Tibial artery (tissue), 4 donors: ENCODE measurements at regions of chr2 and their contacts with region 1.

Region 1: GRCh38 chr2:99559075-99559662 is 69.4 kb upstream of the REV1 start:
- DNase-seq: peak; percentile 85 to 88
- H3K4me3 ChIP-seq: no peak overlapping the region
- H3K27ac ChIP-seq: no peak overlapping the region
- H3K4me1 ChIP-seq: no peaks in the 10 kb centered on the region
- H3K27me3 ChIP-seq: no peaks in the 10 kb centered on the region
- CTCF ChIP-seq: peak; percentile 98 to 99

Region 2: DNA sequence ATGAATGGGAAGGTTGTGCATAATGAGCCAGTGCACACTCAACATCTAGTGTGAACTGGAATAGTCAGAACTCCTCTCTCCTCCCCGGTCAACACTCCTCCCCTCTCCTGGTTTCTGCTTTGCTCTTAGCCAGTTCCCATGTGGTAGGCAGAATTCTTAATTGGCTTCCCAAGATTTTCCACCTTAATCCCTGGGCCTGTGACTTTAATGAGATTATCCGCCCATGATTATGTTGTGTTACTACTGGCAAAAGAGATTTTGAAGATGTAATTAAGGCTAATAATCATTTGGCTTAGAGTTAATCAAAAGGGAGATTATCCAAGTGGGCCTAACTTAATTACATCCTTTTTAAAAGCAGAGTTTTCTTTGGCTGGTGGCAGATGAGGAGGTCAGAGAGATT is 35.1 kb before region 1 on chr2:
- intact Hi-C with region 1: no loop called
- DNase-seq: no peak
- H3K4me3 ChIP-seq: no peak overlapping the region
- H3K27ac ChIP-seq: no peak overlapping the region
- H3K4me1 ChIP-seq: no peaks in the 10 kb centered on the region
- H3K27me3 ChIP-seq: peaks cover 0 to 3% of the 10 kb centered on the region in 2 donors
- CTCF ChIP-seq: no peak

Region 3: GRCh38 chr2:100242891-100243619 is 683.9 kb after region 1 on chr2:
- intact Hi-C with region 1: loop called (anchors 5 kb)
- DNase-seq: peak; percentile 52 to 77
- H3K4me3 ChIP-seq: no peak overlapping the region
- H3K27ac ChIP-seq: no peak overlapping the region
- H3K4me1 ChIP-seq: peaks cover 0 to 8% (median 2%) of the 10 kb centered on the region in 4 donors
- H3K27me3 ChIP-seq: no peaks in the 10 kb centered on the region
- CTCF ChIP-seq: peak; percentile 62 to 75

Region 4: DNA sequence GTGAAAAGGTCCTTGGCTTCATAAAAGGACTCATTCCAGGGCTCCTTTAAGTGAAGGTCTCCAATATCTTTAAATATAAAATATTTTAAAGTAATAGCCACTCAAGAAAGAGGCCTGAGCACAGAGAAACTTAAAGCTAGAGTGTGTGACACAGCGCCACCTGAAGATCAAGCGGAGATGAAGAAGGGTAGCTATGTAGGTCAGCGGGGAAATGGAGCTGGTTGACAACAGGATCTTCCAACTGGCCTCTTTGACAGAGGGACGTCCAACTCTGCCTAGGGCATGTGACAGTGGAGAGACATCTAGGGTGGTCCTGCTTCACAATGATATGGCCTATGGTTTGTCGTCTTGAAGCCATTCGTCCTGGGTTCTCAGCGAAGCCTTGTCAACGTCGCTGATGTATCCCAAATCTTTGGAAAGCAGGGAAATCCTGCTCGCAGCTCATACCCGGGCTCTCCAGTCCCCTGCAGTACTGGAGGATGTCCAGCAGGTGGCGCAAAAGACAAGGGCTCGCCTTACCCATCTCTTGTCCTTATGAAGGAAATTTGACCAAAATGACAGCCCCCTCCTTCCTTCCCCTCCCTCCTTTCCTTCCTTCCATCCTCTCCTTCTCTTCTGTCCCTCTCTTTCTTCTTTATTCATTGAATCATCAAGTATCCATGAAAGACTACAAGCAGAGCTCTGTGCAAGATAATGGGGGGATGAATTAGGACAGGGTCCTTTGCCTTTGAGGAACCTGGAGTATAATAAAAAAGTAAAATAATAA is 703.6 kb after region 1 on chr2:
- intact Hi-C with region 1: loop called (anchors 5 kb)
- DNase-seq: peak; percentile 34 to 79
- H3K4me3 ChIP-seq: no peak overlapping the region
- H3K27ac ChIP-seq: no peak overlapping the region
- H3K4me1 ChIP-seq: peaks cover 0 to 9% (median 3%) of the 10 kb centered on the region in 4 donors
- H3K27me3 ChIP-seq: no peaks in the 10 kb centered on the region
- CTCF ChIP-seq: peak; percentile 84 to 90